Left cardiac atrium (tissue), 4 donors: ENCODE measurements at regions of chr7 and their contacts with region 1.

Region 1: DNA sequence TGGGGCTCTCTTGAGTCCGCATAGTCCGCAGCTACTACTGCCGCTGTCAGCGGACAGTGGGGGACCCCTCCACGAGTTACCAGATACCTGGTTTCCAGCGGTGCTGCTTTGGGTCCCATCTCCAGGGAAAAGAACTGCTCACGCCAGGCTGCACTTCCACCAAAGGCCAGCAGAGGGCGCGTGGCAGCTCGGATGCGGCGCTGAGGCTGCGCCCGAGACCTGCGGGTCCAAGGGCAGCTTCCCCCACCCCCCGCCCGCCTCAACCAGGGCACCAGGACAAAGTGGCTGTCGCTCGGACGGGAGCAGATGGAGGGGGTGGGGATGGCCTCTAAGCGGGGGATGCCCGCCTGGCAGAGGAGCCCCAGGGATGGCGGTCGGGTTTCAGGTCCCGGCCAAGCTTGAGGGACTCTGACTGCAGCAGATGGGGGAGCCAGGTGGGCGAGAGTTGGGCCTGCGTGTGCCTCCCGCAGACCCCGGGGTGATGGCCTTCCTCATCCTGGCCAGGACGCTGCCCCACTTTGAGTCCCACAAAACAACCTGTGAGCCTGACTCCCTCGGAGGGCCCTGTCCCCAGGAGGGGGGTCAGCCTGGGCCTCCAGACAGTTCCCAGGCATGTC is 23.8 kb upstream of the ZNF735 start:
- DNase-seq: no peak
- ATAC-seq: peak; percentile 12 to 23

Region 2: GRCh38 chr7:63846171-63846570 is 337.1 kb before region 1 on chr7:
- intact Hi-C with region 1: no loop called
- DNase-seq: no peak
- ATAC-seq: no peak

Region 3: GRCh38 chr7:64407148-64407547 is 223.9 kb after region 1 on chr7:
- intact Hi-C with region 1: no loop called
- DNase-seq: no peak
- ATAC-seq: no peak

Region 4: GRCh38 chr7:64618785-64619456 is 435.7 kb after region 1 on chr7:
- intact Hi-C with region 1: loop called (anchors 5 kb)
- DNase-seq: no peak
- ATAC-seq: peak; percentile 73 to 81